ENCODE measurements at regions of chr22 and their contacts with region 1.

Region 1: GRCh38 chr22:30634471-30635233 is 929 bp upstream of the SLC35E4 start:
- DNase-seq: peak; percentile 89
- ATAC-seq: peak; percentile 59
- H3K4me3 ChIP-seq: peak overlapping the region; percentile 20
- H3K27ac ChIP-seq: peak overlapping the region; percentile 48
- H3K4me1 ChIP-seq: peaks cover 21% of the 10 kb centered on the region
- H3K27me3 ChIP-seq: no peaks in the 10 kb centered on the region
- CTCF ChIP-seq: peak; percentile 97
- POLR2A ChIP-seq: no peak
- RAD21 ChIP-seq: peak; percentile 96

Region 2: GRCh38 chr22:30531651-30532608 is 102.7 kb before region 1 on chr22:
- CTCF ChIA-PET with region 1: no interaction called
- POLR2A ChIA-PET with region 1: no interaction called
- dilution Hi-C with region 1: no loop called
- in situ Hi-C with region 1: no loop called
- intact Hi-C with region 1: no loop called
- DNase-seq: no peak
- ATAC-seq: no peak
- H3K4me3 ChIP-seq: no peak overlapping the region
- H3K27ac ChIP-seq: no peak overlapping the region
- H3K4me1 ChIP-seq: no peaks in the 10 kb centered on the region
- H3K27me3 ChIP-seq: peaks cover 15% of the 10 kb centered on the region
- CTCF ChIP-seq: no peak
- POLR2A ChIP-seq: no peak
- RAD21 ChIP-seq: no peak

Region 3: DNA sequence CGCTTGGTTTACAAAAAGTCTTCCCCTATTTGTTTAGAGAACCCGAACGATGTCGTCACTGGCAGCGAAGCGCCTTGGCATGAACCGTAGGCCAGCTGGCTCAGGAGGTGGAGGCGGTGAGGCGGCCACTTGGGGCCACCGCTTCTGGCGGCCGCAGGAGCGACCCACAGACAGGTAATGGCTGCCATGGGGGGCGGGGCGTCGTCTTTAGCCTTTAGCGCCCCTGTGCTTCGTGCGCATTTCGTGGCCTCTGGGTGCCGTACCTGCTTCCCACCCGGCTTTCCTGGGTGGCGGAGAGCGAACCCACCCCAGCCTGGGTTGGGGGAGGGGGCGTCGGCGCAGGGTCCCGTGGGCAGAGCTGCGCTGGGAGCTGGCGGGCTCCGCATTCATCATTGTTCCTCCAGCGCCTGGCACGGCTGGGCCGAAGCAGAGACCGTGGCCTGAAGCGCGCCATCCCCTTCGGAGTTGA is 59.6 kb after region 1 on chr22:
- CTCF ChIA-PET with region 1: interaction called, 10 read pairs
- POLR2A ChIA-PET with region 1: no interaction called
- dilution Hi-C with region 1: no loop called
- in situ Hi-C with region 1: no loop called
- intact Hi-C with region 1: no loop called
- DNase-seq: peak; percentile 35
- ATAC-seq: peak; percentile 65
- H3K4me3 ChIP-seq: peak overlapping the region; percentile 61
- H3K27ac ChIP-seq: peak overlapping the region; percentile 2; the same call in 1 of the 2 replicates
- H3K4me1 ChIP-seq: peaks cover 3% of the 10 kb centered on the region; the same call in 1 of the 2 replicates
- H3K27me3 ChIP-seq: no peaks in the 10 kb centered on the region; the same call in 1 of the 2 replicates
- CTCF ChIP-seq: no peak
- POLR2A ChIP-seq: no peak
- RAD21 ChIP-seq: no peak

Region 4: DNA sequence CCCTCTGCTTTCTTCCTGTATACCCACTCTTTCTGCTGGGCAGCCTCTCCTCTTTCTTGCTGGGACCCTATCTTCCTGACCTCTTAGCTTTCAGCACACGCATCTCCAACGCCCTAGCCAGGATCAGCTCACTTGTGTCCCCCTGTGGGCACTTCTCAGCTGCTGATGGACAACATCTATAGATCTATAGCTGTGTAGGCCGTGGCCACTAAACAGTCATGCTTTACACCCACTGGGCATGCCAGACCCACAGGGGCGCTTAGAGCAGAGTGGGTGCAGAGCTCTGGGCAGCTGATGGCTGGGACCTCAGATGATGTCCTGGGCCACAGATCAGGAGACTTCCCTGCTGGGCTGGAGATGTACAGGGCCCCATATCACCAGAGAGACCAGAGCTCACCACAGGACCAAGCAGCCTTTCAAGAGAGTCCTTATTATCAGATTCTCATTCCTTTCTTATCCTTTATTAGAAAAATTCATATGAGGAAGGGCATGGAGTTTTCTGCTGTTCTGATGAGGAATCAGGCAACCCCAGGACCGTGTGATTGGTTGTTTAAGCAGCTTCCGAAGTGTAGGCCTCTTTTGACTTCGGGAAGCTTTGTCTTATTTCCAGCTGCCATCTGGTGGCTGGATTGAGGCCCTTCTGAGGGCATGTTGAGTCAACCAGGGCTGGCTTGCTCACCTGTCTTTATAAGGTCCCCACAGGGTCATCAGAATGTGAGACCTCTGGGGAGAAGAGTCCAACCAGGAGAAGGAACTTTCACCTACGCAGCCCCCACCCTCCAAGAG is 120.5 kb after region 1 on chr22:
- CTCF ChIA-PET with region 1: interaction called, 45 read pairs
- POLR2A ChIA-PET with region 1: interaction called, 7 read pairs
- dilution Hi-C with region 1: no loop called
- in situ Hi-C with region 1: loop called (anchors 5 kb)
- intact Hi-C with region 1: loop called (anchors 1 kb)
- DNase-seq: peak; percentile 84
- ATAC-seq: peak; percentile 97
- H3K4me3 ChIP-seq: no peak overlapping the region
- H3K27ac ChIP-seq: no peak overlapping the region
- H3K4me1 ChIP-seq: peaks cover 2% of the 10 kb centered on the region; the same call in 1 of the 2 replicates
- H3K27me3 ChIP-seq: no peaks in the 10 kb centered on the region
- CTCF ChIP-seq: peak; percentile 92
- POLR2A ChIP-seq: peak; percentile 51; the same call in 1 of the 2 replicates
- RAD21 ChIP-seq: peak; percentile 99

Region 5: DNA sequence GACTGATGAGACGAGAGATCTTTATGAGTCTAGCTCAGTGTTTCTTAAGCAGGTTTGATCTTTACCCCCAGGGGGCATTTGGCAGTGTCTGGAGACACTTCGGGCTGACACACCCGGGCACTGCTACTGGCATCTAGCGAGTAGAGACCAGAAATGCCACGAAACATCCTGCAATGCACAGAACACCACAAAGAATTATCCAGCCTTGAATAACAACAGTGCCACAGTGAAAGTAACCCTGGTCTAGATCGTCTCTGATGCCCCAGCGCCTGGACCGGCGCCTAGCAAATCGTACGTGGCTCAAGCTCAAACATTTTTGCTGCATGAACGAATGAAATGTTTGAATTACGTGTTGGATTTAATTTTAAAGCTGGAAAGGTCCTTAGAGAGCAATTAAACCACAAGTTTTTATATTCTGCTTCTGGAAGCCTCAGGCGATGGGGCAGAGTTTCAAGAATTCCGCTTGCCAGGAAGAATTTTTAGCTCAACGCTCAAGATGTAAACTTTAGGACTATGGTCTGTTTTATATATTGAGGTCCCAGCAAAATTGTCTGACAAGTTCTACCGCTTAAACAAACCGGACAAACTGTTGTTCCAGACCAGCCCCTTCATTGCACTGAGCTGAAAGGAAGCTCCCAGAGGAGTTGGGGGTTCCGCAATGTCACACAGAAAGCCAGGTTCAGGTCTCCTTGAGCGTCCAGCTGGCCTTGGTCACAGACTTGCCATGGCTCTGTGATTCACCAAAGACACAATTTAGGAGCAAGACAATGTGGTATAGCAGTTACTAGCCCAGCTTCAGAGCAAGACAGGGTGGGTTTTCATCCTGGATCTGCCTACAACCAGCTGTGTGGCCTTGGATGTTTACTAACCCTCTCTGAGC is 402.3 kb after region 1 on chr22:
- CTCF ChIA-PET with region 1: no interaction called
- POLR2A ChIA-PET with region 1: no interaction called
- dilution Hi-C with region 1: no loop called
- in situ Hi-C with region 1: no loop called
- intact Hi-C with region 1: no loop called
- DNase-seq: peak; percentile 53
- ATAC-seq: peak; percentile 59
- H3K4me3 ChIP-seq: peak overlapping the region; percentile 13; the same call in 1 of the 2 replicates
- H3K27ac ChIP-seq: peak overlapping the region; percentile 86; the same call in 1 of the 2 replicates
- H3K4me1 ChIP-seq: peaks cover 15% of the 10 kb centered on the region
- H3K27me3 ChIP-seq: no peaks in the 10 kb centered on the region
- CTCF ChIP-seq: peak; percentile 24
- POLR2A ChIP-seq: no peak
- RAD21 ChIP-seq: peak; percentile 25; the same call in 1 of the 2 replicates